CD8-positive, alpha-beta memory T cell (primary cell): ENCODE measurements at regions of chr19 and their contacts with region 1.

Region 1: DNA sequence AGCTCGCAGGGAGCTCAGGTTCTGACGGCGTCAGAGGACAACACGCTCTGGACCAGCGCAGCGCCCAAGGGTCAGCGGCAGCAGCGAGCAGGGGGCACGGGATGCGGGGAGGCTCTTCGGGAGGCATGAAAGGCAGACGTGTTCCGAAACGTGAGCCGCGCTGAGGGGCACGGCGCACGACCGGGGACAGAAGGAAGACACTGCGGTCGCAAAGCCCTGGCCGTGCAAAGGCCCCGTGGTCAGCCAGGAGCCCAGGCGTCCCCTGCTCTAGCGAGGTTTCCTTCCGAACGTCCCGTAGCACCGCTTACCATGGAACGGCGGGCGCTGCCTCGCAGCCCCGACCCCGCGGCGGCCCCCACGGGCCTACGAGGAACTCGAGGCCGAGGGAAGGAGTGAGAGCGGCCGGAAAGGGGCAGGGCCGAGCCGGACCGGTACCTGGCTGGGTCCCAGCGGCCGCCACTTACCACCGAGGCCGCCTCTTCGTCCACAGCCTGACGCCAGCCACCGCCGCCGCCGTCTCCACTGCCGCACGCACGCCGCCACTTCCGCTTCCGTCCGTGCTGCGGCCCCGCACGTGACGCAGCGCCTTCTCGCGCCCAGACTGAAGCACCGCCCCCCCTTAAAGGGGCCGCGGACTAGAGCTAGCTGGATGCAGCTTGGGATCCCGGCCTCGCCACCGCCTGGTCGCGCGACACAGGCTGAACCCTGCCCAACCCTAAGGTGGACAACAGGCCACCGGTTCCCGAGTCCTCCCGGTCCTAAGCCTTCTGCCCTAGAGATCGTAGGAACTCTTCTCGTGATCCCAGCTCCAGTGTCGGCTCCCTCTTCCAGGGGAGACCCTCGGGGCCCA is 9.4 kb downstream of the ABHD17A start:
- DNase-seq: peak; percentile 82 to 89 (median 86)
- H3K4me3 ChIP-seq: peak overlapping the region; percentile 93
- H3K4me3 Mint-ChIP-seq: peak overlapping the region; percentile 93 to 97 (median 96)
- H3K27ac ChIP-seq: peak overlapping the region; percentile 86
- H3K27ac Mint-ChIP-seq: peak overlapping the region; percentile 92 to 99 (median 98)
- H3K4me1 ChIP-seq: peaks cover 38% of the 10 kb centered on the region
- H3K4me1 Mint-ChIP-seq: peaks cover 22 to 49% (median 25%) of the 10 kb centered on the region in 3 donors
- H3K27me3 ChIP-seq: no peaks in the 10 kb centered on the region
- H3K27me3 Mint-ChIP-seq: peaks cover 0 to 5% of the 10 kb centered on the region in 2 donors

Region 2: DNA sequence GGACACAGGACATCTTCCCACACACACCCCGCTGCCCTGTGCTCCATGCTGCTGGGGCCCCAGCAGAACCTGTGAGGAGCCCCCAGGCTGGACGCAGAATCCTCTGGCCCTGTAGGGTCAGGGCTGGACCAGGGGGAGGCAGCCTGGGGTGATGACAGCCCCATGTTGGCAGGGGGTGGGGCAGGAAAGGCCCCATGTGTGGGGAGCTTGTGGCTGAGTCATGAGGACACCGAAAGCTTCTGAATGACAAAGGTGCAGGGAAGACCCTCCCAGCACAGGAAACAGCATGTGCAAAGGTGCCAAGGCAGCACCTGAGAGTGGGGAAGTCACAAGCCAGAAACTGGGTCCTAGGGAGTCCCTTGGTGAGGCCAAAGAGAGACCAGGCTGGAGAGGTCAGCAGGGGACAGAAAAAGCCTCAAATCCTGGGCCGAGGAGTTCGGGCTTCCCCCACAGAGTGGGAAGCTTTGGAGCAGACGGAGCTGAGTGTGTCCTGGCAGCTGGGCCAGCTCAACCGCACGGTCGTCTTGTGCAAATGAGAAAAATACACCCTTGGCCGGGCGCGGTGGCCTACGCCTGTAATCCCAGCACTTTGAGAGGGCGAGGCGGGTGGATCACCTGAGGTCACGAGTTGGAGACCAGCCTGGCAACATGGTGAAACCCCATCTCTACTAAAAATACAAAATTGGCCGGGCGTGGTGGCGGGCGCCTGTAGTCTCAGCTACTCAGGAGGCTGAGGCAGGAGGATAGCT is 81.3 kb before region 1 on chr19:
- CTCF ChIA-PET with region 1: no interaction called
- POLR2A ChIA-PET with region 1: no interaction called
- DNase-seq: no peak
- H3K4me3 ChIP-seq: no peak overlapping the region
- H3K4me3 Mint-ChIP-seq: no peak overlapping the region
- H3K27ac ChIP-seq: no peak overlapping the region
- H3K27ac Mint-ChIP-seq: no peak overlapping the region
- H3K4me1 ChIP-seq: peaks cover 4% of the 10 kb centered on the region
- H3K4me1 Mint-ChIP-seq: peaks cover 0 to 5% (median 5%) of the 10 kb centered on the region in 3 donors
- H3K27me3 ChIP-seq: no peaks in the 10 kb centered on the region
- H3K27me3 Mint-ChIP-seq: peaks cover 8 to 11% of the 10 kb centered on the region in 2 donors

Region 3: GRCh38 chr19:1863726-1864480 is 12.0 kb before region 1 on chr19:
- CTCF ChIA-PET with region 1: interaction called, 9 read pairs
- POLR2A ChIA-PET with region 1: interaction called, 14 read pairs
- DNase-seq: peak; percentile 89 to 94 (median 93)
- H3K4me3 ChIP-seq: peak overlapping the region; percentile 66
- H3K4me3 Mint-ChIP-seq: peak overlapping the region; percentile 66 to 92 (median 76)
- H3K27ac ChIP-seq: peak overlapping the region; percentile 79
- H3K27ac Mint-ChIP-seq: peak overlapping the region in 5 of 8 donors; percentile 40 to 85 (median 64)
- H3K4me1 ChIP-seq: peaks cover 29% of the 10 kb centered on the region
- H3K4me1 Mint-ChIP-seq: peaks cover 18 to 52% (median 26%) of the 10 kb centered on the region in 3 donors
- H3K27me3 ChIP-seq: no peaks in the 10 kb centered on the region
- H3K27me3 Mint-ChIP-seq: peaks cover 0 to 4% of the 10 kb centered on the region in 2 donors

Region 4: GRCh38 chr19:2033825-2034159 is 157.9 kb after region 1 on chr19:
- CTCF ChIA-PET with region 1: no interaction called
- POLR2A ChIA-PET with region 1: interaction called, 11 read pairs
- DNase-seq: no peak
- H3K4me3 ChIP-seq: no peak overlapping the region
- H3K4me3 Mint-ChIP-seq: no peak overlapping the region
- H3K27ac ChIP-seq: no peak overlapping the region
- H3K27ac Mint-ChIP-seq: peak overlapping the region in 1 of 8 donors; percentile 43
- H3K4me1 ChIP-seq: peaks cover 28% of the 10 kb centered on the region
- H3K4me1 Mint-ChIP-seq: peaks cover 18 to 24% (median 22%) of the 10 kb centered on the region in 3 donors
- H3K27me3 ChIP-seq: no peaks in the 10 kb centered on the region
- H3K27me3 Mint-ChIP-seq: no peaks in the 10 kb centered on the region